ENCODE measurements at regions of chr19 and their contacts with region 1.

Region 1: DNA sequence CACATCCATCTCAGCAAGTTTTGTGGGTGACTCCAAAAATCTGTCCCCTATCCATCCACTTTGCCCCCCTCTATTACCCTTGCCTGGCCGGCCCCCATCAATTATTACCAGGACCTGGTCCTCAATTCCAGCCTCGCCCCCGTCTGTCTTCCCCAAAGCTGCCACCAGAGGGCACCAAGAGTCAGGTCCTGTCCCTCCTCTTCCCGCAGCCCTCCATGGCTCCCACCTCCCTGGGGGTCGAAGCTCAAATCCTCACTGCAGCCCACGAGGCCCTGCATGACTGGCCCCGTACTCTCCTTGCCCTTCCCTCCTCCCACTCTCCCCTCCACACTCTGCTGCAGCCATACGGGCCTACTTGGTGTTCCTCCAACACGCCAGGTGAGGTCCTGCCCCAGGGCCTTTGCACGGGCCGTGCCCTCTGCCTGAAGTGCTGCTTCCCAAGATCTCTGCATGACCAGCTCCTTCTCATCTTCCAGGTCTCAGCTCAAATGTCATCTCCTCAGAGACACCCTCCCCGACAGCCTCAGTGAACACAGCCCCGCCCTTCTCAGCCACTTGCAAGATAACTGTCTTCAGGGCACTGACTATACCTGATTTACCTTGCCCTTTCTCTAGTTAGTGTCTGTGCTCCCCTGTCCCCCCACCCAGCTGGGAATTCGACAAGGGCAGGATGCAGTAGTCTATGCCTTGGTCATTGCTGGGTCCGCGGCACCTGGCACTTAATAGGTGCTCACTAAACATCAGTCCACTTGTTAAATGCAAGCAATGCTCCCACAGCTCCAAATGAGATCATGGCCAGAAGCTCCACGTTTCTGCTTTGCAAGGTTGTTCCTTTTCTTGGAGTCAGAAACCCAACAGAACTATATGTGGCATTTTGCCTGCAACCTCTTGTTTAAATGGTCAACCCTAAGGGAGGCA is 16.8 kb upstream of the SEMA6B start:
- DNase-seq: peak; percentile 63 to 72 (median 66)
- ATAC-seq: peak; percentile 45
- H3K4me3 ChIP-seq: no peak overlapping the region
- H3K27ac ChIP-seq: no peak overlapping the region
- H3K4me1 ChIP-seq: peaks cover 4% of the 10 kb centered on the region
- H3K27me3 ChIP-seq: peaks cover 0 to 18% of the 10 kb centered on the region in 2 donors
- CTCF ChIP-seq: peak; percentile 4 to 73 (median 54)
- POLR2A ChIP-seq: no peak

Region 2: GRCh38 chr19:4638828-4639530 is 62.7 kb after region 1 on chr19 and contains the start of gene TNFAIP8L1:
- intact Hi-C with region 1: loop called (anchors 10 kb)
- DNase-seq: peak; percentile 96 to 98 (median 96)
- ATAC-seq: peak; percentile 97
- H3K4me3 ChIP-seq: peak within 1 kb of the TSS; percentile 54 to 56
- H3K27ac ChIP-seq: peak within 1 kb of the TSS in 3 of 4 donors; percentile 3 to 78 (median 58)
- H3K4me1 ChIP-seq: peaks cover 34% of the 10 kb centered on the region
- H3K27me3 ChIP-seq: no peaks in the 10 kb centered on the region
- CTCF ChIP-seq: no peak
- POLR2A ChIP-seq: peak in 2 of 3 donors; percentile 18 to 24
- total RNA-seq, gene TNFAIP8L1: 3.4 to 5.3 TPM

Measured in body of pancreas (tissue), 4 donors.